HepG2 (cell line): ENCODE measurements at regions of chr17 and their contacts with region 1.

Region 1: GRCh38 chr17:77054936-77055335 is 85.8 kb upstream of the SEC14L1 start:
- DNase-seq: no peak
- ATAC-seq: peak; percentile 71
- H3K4me3 ChIP-seq: no peak overlapping the region
- H3K27ac ChIP-seq: no peak overlapping the region
- H3K4me1 ChIP-seq: peaks cover 9% of the 10 kb centered on the region
- H3K27me3 ChIP-seq: peaks cover 29 to 82% of the 10 kb centered on the region in 2 experiments
- CTCF ChIP-seq: no peak
- EP300 ChIP-seq: no peak
- POLR2A ChIP-seq: no peak
- RAD21 ChIP-seq: no peak

Region 2: DNA sequence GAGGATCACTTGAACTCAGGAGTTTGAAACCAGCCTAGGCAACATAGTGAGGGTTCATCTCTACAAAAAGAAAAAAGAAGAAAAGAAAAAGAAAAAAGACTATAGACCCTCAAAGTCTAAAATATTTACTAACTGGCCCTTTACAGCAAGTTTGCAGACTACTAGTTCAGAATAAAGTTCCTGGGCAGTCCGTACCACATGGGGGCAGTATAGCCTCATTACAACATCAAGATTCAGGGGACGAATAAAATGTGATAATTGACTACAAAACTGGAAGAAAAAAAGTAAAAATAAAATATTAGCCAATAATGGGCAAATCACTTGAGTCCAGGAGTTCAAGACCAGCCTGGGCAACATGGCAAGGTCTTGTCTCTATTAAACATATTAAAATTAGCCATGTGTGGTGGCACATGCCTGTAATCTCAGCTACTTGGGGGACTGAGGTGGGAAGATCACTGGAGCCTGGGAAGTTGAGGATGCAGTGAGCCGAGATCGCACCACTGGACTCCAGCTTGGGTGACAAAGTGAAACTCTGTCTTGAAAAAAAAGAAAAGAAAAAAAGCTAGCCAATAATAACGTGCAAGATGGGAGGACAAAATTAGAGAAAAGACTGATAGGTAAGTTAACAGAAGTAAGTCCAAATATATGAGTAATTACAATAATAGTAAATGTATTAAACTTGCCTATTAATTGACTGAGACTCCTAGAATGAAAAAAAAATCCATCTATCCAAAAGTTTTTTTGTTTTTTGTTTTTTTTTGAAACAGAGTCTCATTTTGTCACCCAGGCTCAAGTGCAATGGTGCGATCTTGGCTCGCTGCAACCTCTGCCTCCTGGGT is 43.5 kb before region 1 on chr17:
- CTCF ChIA-PET with region 1: interaction called, 23 read pairs
- POLR2A ChIA-PET with region 1: no interaction called
- in situ Hi-C with region 1: loop called (anchors 5 kb)
- intact Hi-C with region 1: loop called (anchors 1 kb)
- DNase-seq: peak; percentile 53
- ATAC-seq: 0 out of 3 replicates have a peak, but pooled peaks have one; percentile 39
- H3K4me3 ChIP-seq: no peak overlapping the region
- H3K27ac ChIP-seq: no peak overlapping the region
- H3K4me1 ChIP-seq: no peaks in the 10 kb centered on the region
- H3K27me3 ChIP-seq: no peaks in the 10 kb centered on the region
- CTCF ChIP-seq: peak; percentile 71
- EP300 ChIP-seq: no peak
- POLR2A ChIP-seq: no peak
- RAD21 ChIP-seq: peak; percentile 62

Region 3: GRCh38 chr17:77088455-77089123 is 33.7 kb after region 1 on chr17:
- CTCF ChIA-PET with region 1: no interaction called
- POLR2A ChIA-PET with region 1: no interaction called
- in situ Hi-C with region 1: no loop called
- intact Hi-C with region 1: no loop called
- DNase-seq: peak; percentile 99
- ATAC-seq: peak; percentile 96
- H3K4me3 ChIP-seq: peak overlapping the region; percentile 75 to 94 (median 86)
- H3K27ac ChIP-seq: peak overlapping the region; percentile 91
- H3K4me1 ChIP-seq: peaks cover 56% of the 10 kb centered on the region
- H3K27me3 ChIP-seq: no peaks in the 10 kb centered on the region; a peak in 1 of 5 replicates
- CTCF ChIP-seq: peak; percentile 99
- EP300 ChIP-seq: peak in 1 of 2 experiments; percentile 45; a peak in 1 of 4 replicates
- POLR2A ChIP-seq: peak; percentile 79 to 92
- RAD21 ChIP-seq: peak; percentile 88

Region 4: DNA sequence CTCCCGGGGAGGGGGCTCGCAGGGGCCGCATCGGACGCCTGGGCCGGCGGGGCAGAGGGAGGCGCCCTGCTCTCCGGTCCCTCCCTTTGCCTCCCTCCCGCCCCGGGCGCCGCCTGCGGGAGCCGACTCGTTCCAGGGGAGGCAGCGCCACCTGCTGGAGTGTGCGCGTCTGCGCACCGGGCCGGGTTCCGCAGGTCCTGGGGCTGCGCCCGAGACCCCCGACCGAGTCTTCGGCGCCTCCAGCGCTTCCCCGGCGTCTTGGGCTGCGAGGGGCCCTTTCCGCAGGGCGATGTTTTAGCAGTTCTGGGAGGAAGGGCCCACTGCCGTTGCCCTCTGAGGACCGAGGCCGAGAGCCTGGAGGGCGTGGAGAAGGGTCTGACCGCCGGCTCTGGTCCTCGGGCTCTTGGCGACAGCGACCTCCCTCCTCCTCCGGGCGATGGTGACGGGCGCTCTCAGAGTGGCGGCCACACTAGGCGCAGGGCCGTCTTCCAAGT is 192.2 kb after region 1 on chr17:
- CTCF ChIA-PET with region 1: no interaction called
- POLR2A ChIA-PET with region 1: no interaction called
- in situ Hi-C with region 1: no loop called
- intact Hi-C with region 1: no loop called
- DNase-seq: peak; percentile 67
- ATAC-seq: peak; percentile 93
- H3K4me3 ChIP-seq: peak overlapping the region; percentile 54 to 81 (median 59); a peak in 5 of 6 replicates
- H3K27ac ChIP-seq: no peak overlapping the region
- H3K4me1 ChIP-seq: peaks cover 19% of the 10 kb centered on the region
- H3K27me3 ChIP-seq: peaks cover 17 to 58% of the 10 kb centered on the region in 2 experiments
- CTCF ChIP-seq: peak; percentile 98
- EP300 ChIP-seq: no peak
- POLR2A ChIP-seq: no peak
- RAD21 ChIP-seq: peak; percentile 99